H1 (cell line): ENCODE measurements at regions of chr1 and their contacts with region 1.

Region 1: DNA sequence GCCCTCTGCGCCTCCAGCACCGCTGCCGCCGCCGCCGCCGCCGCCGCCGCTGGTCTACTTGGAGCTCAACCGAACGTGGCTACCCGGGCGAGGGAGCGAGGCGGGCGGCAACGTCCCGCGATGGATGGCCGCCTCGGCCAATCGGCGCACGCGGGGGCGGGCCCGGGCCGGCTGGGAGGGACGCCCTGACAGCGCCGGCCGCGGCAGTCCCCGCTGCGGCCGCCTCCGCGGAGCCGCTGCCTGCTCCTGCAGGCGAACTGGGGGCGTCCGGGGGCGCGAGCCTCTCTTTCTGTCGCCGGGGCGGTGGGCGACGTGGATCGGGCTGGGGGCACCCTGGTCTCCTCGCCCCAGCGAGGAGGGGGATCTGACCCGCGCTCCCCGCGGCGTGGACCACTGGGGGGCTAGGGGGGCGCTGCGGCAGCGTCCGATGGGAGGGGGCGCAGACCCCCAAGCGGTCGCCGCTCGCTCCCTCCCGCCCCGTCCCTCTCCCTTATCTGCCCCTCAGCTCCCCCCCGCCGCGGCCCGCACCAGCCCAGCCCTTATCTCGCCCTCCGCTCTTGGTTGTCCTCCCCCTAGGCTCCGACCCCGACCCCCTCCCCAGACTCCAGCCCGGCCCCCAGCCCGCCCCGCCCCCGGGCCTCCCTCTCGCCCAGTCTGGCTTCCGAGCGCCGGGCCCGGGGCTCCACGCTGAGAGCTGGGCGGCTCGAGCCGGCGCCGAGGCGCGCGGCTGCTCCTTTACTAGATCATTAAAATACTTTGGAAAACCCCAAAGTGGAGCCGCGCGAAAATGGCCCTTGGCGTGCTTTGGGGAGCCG is at the start of gene SSBP3:
- DNase-seq: peak in 1 of 2 experiments; percentile 96
- H3K4me3 ChIP-seq: peak within 1 kb of the TSS; percentile 75 to 90 (median 83)
- H3K27ac ChIP-seq: peak within 1 kb of the TSS; percentile 90
- H3K4me1 ChIP-seq: peaks cover 14 to 35% (median 23%) of the 10 kb centered on the region in 4 experiments
- H3K27me3 ChIP-seq: no peaks in the 10 kb centered on the region
- CTCF ChIP-seq: no peak
- EP300 ChIP-seq: no peak
- POLR2A ChIP-seq: peak in 1 of 2 experiments; percentile 77; a peak in 1 of 3 replicates
- RAD21 ChIP-seq: peak in 1 of 2 experiments; percentile 3; a peak in 1 of 4 replicates
- total RNA-seq, gene SSBP3: 133 and 134 TPM in 2 replicates

Region 2: GRCh38 chr1:54153548-54154439 is 252.8 kb before region 1 on chr1:
- CTCF ChIA-PET with region 1: no interaction called
- POLR2A ChIA-PET with region 1: no interaction called
- DNase-seq: peak in 1 of 2 experiments; percentile 66
- H3K4me3 ChIP-seq: no peak overlapping the region
- H3K27ac ChIP-seq: no peak overlapping the region
- H3K4me1 ChIP-seq: no peaks in the 10 kb centered on the region; a peak in 2 of 7 replicates
- H3K27me3 ChIP-seq: no peaks in the 10 kb centered on the region
- CTCF ChIP-seq: no peak
- EP300 ChIP-seq: no peak
- POLR2A ChIP-seq: no peak
- RAD21 ChIP-seq: no peak

Region 3: DNA sequence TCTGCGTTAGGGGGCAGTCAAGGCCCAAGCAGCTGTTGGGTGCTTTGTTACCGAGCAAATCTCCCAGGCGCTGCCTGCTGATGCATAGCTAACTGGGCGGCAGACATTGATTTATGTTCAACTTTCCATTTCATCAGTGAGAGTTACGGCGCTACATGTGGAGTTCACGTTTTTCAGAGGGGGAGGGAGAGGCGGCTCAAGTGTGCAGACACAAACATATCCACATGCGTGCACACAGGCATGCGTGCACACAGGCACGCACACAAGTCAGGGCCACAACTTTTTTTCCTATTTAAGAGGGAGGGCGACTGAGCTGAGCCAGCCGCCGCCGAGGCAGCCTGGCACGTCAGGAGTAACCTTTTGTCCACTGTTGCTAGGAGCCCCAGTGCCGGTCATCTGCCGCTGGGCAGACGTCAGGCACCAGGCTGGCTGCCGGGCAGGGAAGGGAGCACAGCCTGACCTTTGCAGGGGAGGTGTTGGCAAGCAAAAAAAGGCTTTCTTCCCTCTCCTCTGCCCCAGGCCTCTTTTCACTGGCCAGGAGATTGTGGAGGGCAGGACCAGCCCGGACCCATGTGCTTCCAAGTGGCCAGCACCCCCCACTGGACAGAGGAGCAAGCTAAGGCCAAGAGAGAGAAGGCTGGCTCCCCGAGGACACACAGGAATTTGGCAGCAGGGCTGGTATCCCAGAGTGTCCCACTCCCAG is 133.3 kb before region 1 on chr1:
- CTCF ChIA-PET with region 1: interaction called, 11 read pairs
- POLR2A ChIA-PET with region 1: interaction called, 4 read pairs
- DNase-seq: peak in 1 of 2 experiments; percentile 65
- H3K4me3 ChIP-seq: no peak overlapping the region; a peak in 1 of 8 replicates
- H3K27ac ChIP-seq: no peak overlapping the region
- H3K4me1 ChIP-seq: peaks cover 9 to 28% (median 21%) of the 10 kb centered on the region in 4 experiments
- H3K27me3 ChIP-seq: no peaks in the 10 kb centered on the region
- CTCF ChIP-seq: peak; percentile 27 to 60 (median 59)
- EP300 ChIP-seq: no peak
- POLR2A ChIP-seq: no peak
- RAD21 ChIP-seq: peak; percentile 59 to 65

Region 4: GRCh38 chr1:54376430-54377039 is 30.0 kb before region 1 on chr1:
- CTCF ChIA-PET with region 1: interaction called, 3 read pairs
- POLR2A ChIA-PET with region 1: interaction called, 10 read pairs
- DNase-seq: no peak
- H3K4me3 ChIP-seq: peak overlapping the region in 2 of 4 experiments; percentile 2 to 7; a peak in 2 of 8 replicates
- H3K27ac ChIP-seq: peak overlapping the region; percentile 41; the same call in 1 of the 2 replicates
- H3K4me1 ChIP-seq: peaks cover 42 to 75% (median 59%) of the 10 kb centered on the region in 4 experiments
- H3K27me3 ChIP-seq: no peaks in the 10 kb centered on the region
- CTCF ChIP-seq: no peak
- EP300 ChIP-seq: no peak
- POLR2A ChIP-seq: no peak
- RAD21 ChIP-seq: no peak

Region 5: GRCh38 chr1:54474639-54475251 is 68.2 kb after region 1 on chr1:
- CTCF ChIA-PET with region 1: interaction called, 6 read pairs
- POLR2A ChIA-PET with region 1: interaction called, 15 read pairs
- DNase-seq: peak in 1 of 2 experiments; percentile 77
- H3K4me3 ChIP-seq: peak overlapping the region; percentile 38 to 55 (median 44)
- H3K27ac ChIP-seq: no peak overlapping the region; the same call in 1 of the 2 replicates
- H3K4me1 ChIP-seq: peaks cover 20 to 43% (median 30%) of the 10 kb centered on the region in 4 experiments
- H3K27me3 ChIP-seq: peaks cover 0 to 27% (median 12%) of the 10 kb centered on the region in 4 experiments; a peak in 5 of 7 replicates
- CTCF ChIP-seq: no peak
- EP300 ChIP-seq: no peak; a peak in 1 of 3 replicates
- POLR2A ChIP-seq: no peak
- RAD21 ChIP-seq: no peak; a peak in 1 of 4 replicates

Region 6: GRCh38 chr1:54499360-54500106 is 93.0 kb after region 1 on chr1:
- CTCF ChIA-PET with region 1: interaction called, 3 read pairs
- POLR2A ChIA-PET with region 1: interaction called, 16 read pairs
- DNase-seq: peak in 1 of 2 experiments; percentile 74
- H3K4me3 ChIP-seq: peak overlapping the region; percentile 25 to 65 (median 48)
- H3K27ac ChIP-seq: no peak overlapping the region
- H3K4me1 ChIP-seq: peaks cover 0 to 20% (median 10%) of the 10 kb centered on the region in 4 experiments; a peak in 6 of 7 replicates
- H3K27me3 ChIP-seq: peaks cover 0 to 3% (median 1%) of the 10 kb centered on the region in 4 experiments; a peak in 5 of 7 replicates
- CTCF ChIP-seq: peak in 2 of 3 experiments; percentile 27 to 49; a peak in 3 of 4 replicates
- EP300 ChIP-seq: no peak
- POLR2A ChIP-seq: no peak
- RAD21 ChIP-seq: peak in 1 of 2 experiments; percentile 44; a peak in 2 of 4 replicates